HEK293 (cell line): ENCODE measurements at regions of chr17 and their contacts with region 1.

Region 1: DNA sequence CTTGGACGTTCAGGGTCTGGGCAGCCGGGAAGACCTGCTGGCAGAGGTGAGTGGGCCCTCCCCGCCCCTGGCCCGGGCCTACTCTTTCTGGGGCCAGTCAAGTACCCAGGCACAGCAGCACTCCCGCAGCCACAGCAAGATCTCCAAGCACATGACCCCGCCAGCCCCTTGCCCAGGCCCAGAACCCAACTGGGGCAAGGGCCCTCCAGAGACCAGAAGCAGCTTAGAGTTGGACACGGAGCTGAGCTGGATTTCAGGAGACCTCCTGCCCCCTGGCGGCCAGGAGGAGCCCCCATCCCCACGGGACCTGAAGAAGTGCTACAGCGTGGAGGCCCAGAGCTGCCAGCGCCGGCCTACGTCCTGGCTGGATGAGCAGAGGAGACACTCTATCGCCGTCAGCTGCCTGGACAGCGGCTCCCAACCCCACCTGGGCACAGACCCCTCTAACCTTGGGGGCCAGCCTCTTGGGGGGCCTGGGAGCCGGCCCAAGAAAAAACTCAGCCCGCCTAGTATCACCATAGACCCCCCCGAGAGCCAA is 8.6 kb upstream of the ABCC3 start:
- H3K4me3 ChIP-seq: no peak overlapping the region
- H3K27ac ChIP-seq: no peak overlapping the region
- H3K4me1 ChIP-seq: no peaks in the 10 kb centered on the region; the same call in 1 of the 2 replicates
- CTCF ChIP-seq: peak; percentile 92

Region 2: GRCh38 chr17:50478391-50479381 is 147.4 kb before region 1 on chr17 and contains the start of gene RSAD1:
- CTCF ChIA-PET with region 1: interaction called, 33 read pairs
- POLR2A ChIA-PET with region 1: interaction called, 3 read pairs
- H3K4me3 ChIP-seq: peak within 1 kb of the TSS; percentile 64
- H3K27ac ChIP-seq: peak within 1 kb of the TSS; percentile 88
- H3K4me1 ChIP-seq: peaks cover 6% of the 10 kb centered on the region
- CTCF ChIP-seq: peak; percentile 83; the same call in 1 of the 2 replicates

Region 3: DNA sequence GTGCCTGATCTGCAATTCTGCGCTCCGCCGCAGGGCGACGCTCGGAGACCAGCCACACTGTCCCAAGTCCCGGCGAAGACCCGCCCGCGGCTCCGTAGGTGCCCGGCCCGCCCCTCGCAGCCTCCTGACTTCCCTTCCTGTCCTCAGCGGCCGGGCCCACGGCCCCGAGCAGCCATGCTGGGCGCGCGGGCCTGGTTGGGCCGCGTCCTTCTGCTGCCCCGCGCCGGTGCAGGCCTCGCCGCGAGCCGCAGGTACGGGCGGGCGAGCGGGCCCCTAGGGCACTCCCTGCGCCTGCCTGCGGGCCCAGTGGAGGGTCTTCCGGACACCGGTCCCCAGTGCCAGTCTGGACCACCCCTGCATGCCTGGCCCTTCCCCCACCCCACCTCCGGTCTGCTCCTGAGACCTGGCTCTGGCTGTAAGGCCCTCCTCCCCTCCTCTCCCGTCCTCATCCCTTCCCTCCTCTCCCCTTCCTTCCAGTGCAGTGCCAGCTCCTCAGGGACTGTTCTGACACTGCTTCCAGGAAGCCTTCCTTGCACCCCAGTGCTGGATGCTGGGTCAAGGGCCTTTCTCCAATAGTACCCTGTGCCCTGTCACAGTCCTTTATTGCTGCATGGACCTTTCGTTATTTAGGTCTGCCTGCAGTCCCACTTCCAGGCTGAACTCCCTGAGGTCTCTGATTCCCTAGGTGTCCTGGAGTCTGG is 78.9 kb before region 1 on chr17 and contains the start of gene SPATA20:
- CTCF ChIA-PET with region 1: interaction called, 231 read pairs
- POLR2A ChIA-PET with region 1: interaction called, 5 read pairs
- H3K4me3 ChIP-seq: peak within 1 kb of the TSS; percentile 53
- H3K27ac ChIP-seq: peak within 1 kb of the TSS; percentile 73
- H3K4me1 ChIP-seq: peaks cover 16% of the 10 kb centered on the region
- CTCF ChIP-seq: peak; percentile 94

Region 4: DNA sequence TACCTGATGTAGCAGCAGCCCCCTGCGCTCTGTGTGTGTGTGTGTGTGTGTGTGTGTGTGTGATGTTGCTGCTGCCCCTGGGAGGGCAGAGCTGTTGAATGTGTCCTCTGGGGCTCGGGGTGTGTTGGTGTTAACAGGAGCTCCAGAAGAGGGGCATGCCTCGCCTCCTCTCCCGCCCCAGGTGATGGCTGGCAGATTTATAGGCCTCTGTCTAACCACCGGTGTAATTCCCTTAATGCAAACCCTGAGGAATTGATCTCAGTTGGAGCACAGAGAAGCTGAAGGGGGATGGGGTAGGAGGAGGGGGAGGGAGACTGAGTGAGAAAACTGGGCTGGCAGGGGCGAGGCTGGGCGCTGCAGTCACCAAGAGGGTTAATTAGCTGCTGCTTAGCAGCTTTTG is 55.6 kb before region 1 on chr17:
- CTCF ChIA-PET with region 1: interaction called, 12 read pairs
- POLR2A ChIA-PET with region 1: no interaction called
- H3K4me3 ChIP-seq: no peak overlapping the region
- H3K27ac ChIP-seq: no peak overlapping the region
- H3K4me1 ChIP-seq: peaks cover 3% of the 10 kb centered on the region; the same call in 1 of the 2 replicates
- CTCF ChIP-seq: no peak

Region 5: DNA sequence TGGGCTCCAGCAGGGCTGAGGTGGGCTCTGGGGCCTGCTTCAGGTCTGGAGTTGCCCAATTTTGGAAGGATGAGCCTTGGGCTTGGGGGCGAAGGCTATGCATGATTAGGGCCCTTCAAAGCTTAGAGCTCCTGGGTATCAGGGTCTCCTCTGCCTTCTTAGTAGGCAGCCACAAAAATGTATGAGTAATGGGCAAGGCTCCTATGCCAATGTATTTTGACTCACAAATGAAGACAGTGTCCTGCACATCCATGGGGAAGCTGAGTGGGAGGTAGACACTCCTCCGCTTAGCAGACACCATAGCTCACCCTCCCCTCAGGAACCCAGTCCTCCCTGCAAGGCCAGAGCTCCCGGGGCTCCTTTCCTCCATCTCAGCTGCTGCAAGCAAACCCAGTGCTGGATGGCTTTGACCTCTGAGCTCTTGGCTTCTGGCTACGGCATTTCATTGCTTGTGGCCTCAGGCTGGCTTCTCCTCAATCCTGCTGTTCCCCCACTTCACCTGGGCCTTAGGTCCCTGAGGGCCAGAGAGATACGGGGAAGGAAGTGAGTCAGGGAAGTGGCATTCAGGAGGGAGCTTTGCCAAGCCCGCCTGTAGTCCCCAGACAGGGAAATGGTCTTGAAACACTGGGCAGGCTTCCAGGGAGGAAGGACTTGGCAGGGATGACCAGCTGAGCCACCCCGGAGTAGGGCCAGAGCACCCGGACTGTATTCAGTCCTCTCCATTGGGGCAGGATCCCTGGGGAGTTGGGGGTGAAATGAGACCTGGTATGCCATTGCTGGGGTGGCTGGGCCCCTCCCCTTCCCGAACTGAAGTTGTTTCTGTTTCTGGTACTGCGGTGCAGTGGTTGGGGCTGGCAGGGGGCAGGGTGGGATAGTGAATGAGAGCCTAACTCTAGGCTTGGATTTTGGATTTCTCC is 13.0 kb after region 1 on chr17:
- CTCF ChIA-PET with region 1: interaction called, 130 read pairs
- POLR2A ChIA-PET with region 1: interaction called, 8 read pairs
- H3K4me3 ChIP-seq: no peak overlapping the region
- H3K27ac ChIP-seq: no peak overlapping the region; the same call in 1 of the 2 replicates
- H3K4me1 ChIP-seq: peaks cover 3% of the 10 kb centered on the region
- CTCF ChIP-seq: no peak

Region 6: DNA sequence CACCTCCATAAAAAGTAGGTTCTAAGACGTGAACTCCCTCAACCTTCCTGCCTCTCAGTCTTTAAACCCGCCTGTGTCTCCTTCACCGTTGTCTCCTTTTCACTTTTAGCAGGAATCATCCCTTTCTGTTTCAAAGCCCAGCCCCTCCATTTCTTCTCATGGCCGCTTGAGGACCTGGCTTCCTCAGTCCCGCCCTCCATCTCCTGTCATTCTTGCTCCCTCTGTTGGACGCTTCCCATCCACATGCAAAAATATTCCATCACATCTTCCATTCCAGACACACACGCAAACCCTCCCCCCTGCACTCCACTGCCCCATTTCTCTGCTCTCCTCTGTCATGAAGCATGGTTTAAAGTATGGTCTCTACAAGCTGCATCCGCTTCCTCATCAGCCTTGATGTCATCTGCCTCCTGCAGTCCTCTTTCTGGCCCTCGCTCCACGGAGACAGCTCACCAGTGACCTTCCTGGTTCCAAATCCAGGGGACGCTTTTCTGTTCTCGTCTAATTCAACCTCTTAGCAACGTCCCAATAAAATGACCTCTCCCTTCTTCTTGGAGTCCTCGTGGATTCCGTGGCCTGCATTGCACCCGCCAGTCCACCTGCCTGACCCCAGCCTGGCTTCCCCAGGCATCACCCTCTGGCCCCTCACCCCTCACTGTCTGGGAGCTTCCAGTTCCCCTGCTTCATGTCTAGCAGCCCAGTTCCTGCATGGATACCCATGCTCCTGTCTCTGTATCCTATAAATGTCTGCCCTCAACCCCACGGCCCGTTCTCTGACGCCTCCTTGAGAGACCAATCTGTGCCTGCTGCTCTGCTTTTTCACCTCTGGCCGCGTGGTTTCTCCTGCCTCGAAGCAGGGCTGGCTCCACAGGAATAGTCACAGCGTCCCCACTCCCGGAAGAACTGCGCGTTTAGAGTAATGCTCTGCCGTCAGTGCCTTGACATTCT is 55.4 kb after region 1 on chr17:
- CTCF ChIA-PET with region 1: interaction called, 31 read pairs
- POLR2A ChIA-PET with region 1: no interaction called
- H3K4me3 ChIP-seq: no peak overlapping the region
- H3K27ac ChIP-seq: no peak overlapping the region
- H3K4me1 ChIP-seq: peaks cover 3% of the 10 kb centered on the region; the same call in 1 of the 2 replicates
- CTCF ChIP-seq: peak; percentile 98

Region 7: GRCh38 chr17:50691545-50692447 is 65.7 kb after region 1 on chr17:
- CTCF ChIA-PET with region 1: interaction called, 200 read pairs
- POLR2A ChIA-PET with region 1: interaction called, 3 read pairs
- H3K4me3 ChIP-seq: no peak overlapping the region
- H3K27ac ChIP-seq: no peak overlapping the region
- H3K4me1 ChIP-seq: peaks cover 4% of the 10 kb centered on the region; the same call in 1 of the 2 replicates
- CTCF ChIP-seq: no peak

Region 8: GRCh38 chr17:50792132-50792531 is 166.0 kb after region 1 on chr17:
- CTCF ChIA-PET with region 1: no interaction called
- POLR2A ChIA-PET with region 1: no interaction called
- H3K4me3 ChIP-seq: no peak overlapping the region
- H3K27ac ChIP-seq: no peak overlapping the region
- H3K4me1 ChIP-seq: no peaks in the 10 kb centered on the region
- CTCF ChIP-seq: no peak